Calu3 (cell line): ENCODE measurements at regions of chr3 and their contacts with region 1.

Region 1: GRCh38 chr3:66276705-66277274 is 56.0 kb downstream of the SLC25A26 start:
- DNase-seq: peak; percentile 66
- H3K4me3 Mint-ChIP-seq: no peak overlapping the region
- H3K27ac Mint-ChIP-seq: no peak overlapping the region
- H3K4me1 Mint-ChIP-seq: no peaks in the 10 kb centered on the region
- H3K27me3 Mint-ChIP-seq: no peaks in the 10 kb centered on the region
- CTCF ChIP-seq: no peak

Region 2: GRCh38 chr3:66253790-66254620 is 22.8 kb before region 1 on chr3:
- CTCF ChIA-PET with region 1: no interaction called
- intact Hi-C with region 1: no loop called
- DNase-seq: no peak
- H3K4me3 Mint-ChIP-seq: no peak overlapping the region
- H3K27ac Mint-ChIP-seq: no peak overlapping the region
- H3K4me1 Mint-ChIP-seq: no peaks in the 10 kb centered on the region
- H3K27me3 Mint-ChIP-seq: no peaks in the 10 kb centered on the region
- CTCF ChIP-seq: peak; percentile 50

Region 3: DNA sequence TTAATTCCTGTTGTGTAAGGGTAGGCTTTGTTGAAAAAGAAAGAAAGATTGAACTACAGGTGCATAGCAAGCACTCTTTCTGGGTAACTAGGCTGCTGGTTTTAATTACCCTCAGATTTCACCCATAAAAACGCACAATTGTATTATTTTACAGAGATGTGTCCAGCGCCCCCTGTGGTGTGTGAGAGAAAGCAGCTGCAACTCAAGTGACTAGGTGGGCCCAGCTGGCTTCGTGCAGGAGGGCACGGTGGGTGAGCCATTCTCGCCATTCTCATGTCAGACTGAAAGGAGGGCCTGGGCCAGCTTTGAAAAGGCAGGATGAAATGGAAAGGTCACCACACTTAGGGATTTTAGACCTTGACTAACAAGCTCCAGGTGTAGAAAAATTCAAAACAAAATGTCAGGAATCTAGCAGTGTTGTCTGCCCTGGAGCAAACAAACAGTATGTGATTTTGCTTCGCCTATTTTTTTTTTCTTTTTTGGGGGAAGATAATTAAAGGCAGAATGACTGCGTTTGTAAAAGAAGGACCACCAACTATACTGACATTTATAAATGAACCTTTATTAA is 101.5 kb after region 1 on chr3:
- CTCF ChIA-PET with region 1: no interaction called
- intact Hi-C with region 1: loop called (anchors 5 kb)
- DNase-seq: no peak
- H3K4me3 Mint-ChIP-seq: no peak overlapping the region
- H3K27ac Mint-ChIP-seq: no peak overlapping the region
- H3K4me1 Mint-ChIP-seq: peaks cover 12% of the 10 kb centered on the region
- H3K27me3 Mint-ChIP-seq: no peaks in the 10 kb centered on the region
- CTCF ChIP-seq: peak; percentile 32

Region 4: DNA sequence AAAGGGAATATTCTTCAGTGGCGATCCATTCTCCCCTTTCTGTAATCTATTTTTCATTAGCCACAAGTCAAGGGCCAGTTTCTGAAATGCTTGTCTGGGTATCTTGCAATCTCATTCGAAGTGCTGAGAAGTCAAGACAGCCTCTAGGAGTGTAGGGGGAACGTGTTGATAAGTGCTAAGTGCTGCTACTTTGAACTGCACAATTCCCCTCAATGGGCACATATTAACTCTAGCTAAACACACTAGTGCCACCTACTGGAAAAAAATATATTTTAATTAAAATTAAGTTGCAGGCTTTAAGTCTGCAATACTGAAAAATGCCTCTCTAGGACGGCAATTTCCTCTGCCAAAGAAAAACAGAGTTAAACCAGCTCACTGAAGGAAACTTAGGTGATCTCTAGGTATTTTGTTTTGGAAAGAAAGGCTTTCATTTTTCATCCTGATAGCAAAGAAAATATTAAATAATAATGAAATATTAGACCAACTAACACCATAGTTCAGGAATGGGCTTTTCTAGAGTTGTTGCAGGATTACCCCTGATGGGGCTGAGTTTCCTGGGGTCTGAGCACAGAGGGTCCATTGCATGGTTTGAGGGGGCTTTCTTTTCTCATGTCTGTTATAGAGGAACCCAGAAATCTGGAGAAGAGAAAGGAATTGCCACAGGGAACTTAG is 539.4 kb after region 1 on chr3:
- CTCF ChIA-PET with region 1: interaction called, 3 read pairs
- intact Hi-C with region 1: loop called (anchors 1 kb)
- DNase-seq: no peak
- H3K4me3 Mint-ChIP-seq: no peak overlapping the region
- H3K27ac Mint-ChIP-seq: no peak overlapping the region
- H3K4me1 Mint-ChIP-seq: no peaks in the 10 kb centered on the region
- H3K27me3 Mint-ChIP-seq: peaks cover 8% of the 10 kb centered on the region
- CTCF ChIP-seq: peak; percentile 23

Region 5: GRCh38 chr3:66822186-66823008 is 545.6 kb after region 1 on chr3:
- CTCF ChIA-PET with region 1: interaction called, 8 read pairs
- intact Hi-C with region 1: loop called (anchors 1 kb)
- DNase-seq: peak; percentile 81
- H3K4me3 Mint-ChIP-seq: no peak overlapping the region
- H3K27ac Mint-ChIP-seq: no peak overlapping the region
- H3K4me1 Mint-ChIP-seq: no peaks in the 10 kb centered on the region
- H3K27me3 Mint-ChIP-seq: peaks cover 14% of the 10 kb centered on the region
- CTCF ChIP-seq: peak; percentile 58